Activated B cell treated with CpG ODN at 0.5 μM for 24 hours (primary cell): ENCODE measurements at regions of chr2 and their contacts with region 1.

Region 1: GRCh38 chr2:158903711-158904443 is 64.6 kb upstream of the TANC1 start:
- DNase-seq: no peak
- ATAC-seq: no peak
- H3K4me3 Mint-ChIP-seq: no peak overlapping the region
- H3K27ac Mint-ChIP-seq: no peak overlapping the region
- H3K4me1 Mint-ChIP-seq: no peaks in the 10 kb centered on the region
- H3K27me3 Mint-ChIP-seq: peaks cover 2% of the 10 kb centered on the region
- CTCF ChIP-seq: no peak

Region 2: DNA sequence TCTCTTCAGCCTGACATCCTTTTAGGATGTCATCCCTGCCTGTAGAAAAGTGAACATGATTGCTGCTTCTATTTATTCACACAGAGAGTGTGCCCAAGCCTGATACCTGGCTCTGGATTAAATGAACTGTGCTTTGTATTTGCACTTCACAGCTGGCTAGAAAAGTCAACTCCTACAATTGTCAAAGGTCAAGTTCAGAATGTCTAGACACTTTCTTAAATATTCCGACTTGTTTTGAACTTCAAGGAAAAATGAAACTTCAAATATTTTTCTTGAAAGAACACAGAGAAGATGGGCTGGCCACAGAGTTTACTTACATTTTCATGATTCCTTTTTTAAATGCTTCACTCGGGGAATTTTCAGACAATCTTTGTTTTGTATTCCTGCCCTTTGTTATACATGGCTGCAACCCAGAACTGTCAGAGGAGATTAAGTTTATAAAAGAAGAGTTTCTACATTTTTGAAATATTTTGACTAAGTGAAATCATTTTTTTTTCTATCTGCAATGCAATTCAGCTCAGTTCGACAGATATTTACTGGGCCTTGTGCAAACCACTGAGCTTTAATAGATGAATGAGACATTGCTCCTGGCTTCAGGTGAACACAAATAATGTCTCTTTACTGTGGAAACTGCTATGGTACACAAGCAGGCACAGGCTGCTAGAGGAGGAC is 75.2 kb before region 1 on chr2:
- CTCF ChIA-PET with region 1: no interaction called
- POLR2A ChIA-PET with region 1: no interaction called
- intact Hi-C with region 1: no loop called
- DNase-seq: no peak
- ATAC-seq: no peak
- H3K4me3 Mint-ChIP-seq: no peak overlapping the region
- H3K27ac Mint-ChIP-seq: no peak overlapping the region
- H3K4me1 Mint-ChIP-seq: no peaks in the 10 kb centered on the region
- H3K27me3 Mint-ChIP-seq: peaks cover 2% of the 10 kb centered on the region
- CTCF ChIP-seq: no peak

Region 3: GRCh38 chr2:158878003-158878402 is 25.9 kb before region 1 on chr2:
- CTCF ChIA-PET with region 1: no interaction called
- POLR2A ChIA-PET with region 1: no interaction called
- intact Hi-C with region 1: no loop called
- DNase-seq: no peak
- ATAC-seq: no peak
- H3K4me3 Mint-ChIP-seq: no peak overlapping the region
- H3K27ac Mint-ChIP-seq: no peak overlapping the region
- H3K4me1 Mint-ChIP-seq: no peaks in the 10 kb centered on the region
- H3K27me3 Mint-ChIP-seq: no peaks in the 10 kb centered on the region
- CTCF ChIP-seq: no peak

Region 4: GRCh38 chr2:159118115-159118858 is 214.4 kb after region 1 on chr2:
- CTCF ChIA-PET with region 1: interaction called, 20 read pairs
- POLR2A ChIA-PET with region 1: no interaction called
- intact Hi-C with region 1: loop called (anchors 1 kb)
- DNase-seq: peak; percentile 31
- ATAC-seq: peak; percentile 71
- H3K4me3 Mint-ChIP-seq: no peak overlapping the region
- H3K27ac Mint-ChIP-seq: no peak overlapping the region
- H3K4me1 Mint-ChIP-seq: peaks cover 3% of the 10 kb centered on the region
- H3K27me3 Mint-ChIP-seq: no peaks in the 10 kb centered on the region
- CTCF ChIP-seq: no peak

Region 5: DNA sequence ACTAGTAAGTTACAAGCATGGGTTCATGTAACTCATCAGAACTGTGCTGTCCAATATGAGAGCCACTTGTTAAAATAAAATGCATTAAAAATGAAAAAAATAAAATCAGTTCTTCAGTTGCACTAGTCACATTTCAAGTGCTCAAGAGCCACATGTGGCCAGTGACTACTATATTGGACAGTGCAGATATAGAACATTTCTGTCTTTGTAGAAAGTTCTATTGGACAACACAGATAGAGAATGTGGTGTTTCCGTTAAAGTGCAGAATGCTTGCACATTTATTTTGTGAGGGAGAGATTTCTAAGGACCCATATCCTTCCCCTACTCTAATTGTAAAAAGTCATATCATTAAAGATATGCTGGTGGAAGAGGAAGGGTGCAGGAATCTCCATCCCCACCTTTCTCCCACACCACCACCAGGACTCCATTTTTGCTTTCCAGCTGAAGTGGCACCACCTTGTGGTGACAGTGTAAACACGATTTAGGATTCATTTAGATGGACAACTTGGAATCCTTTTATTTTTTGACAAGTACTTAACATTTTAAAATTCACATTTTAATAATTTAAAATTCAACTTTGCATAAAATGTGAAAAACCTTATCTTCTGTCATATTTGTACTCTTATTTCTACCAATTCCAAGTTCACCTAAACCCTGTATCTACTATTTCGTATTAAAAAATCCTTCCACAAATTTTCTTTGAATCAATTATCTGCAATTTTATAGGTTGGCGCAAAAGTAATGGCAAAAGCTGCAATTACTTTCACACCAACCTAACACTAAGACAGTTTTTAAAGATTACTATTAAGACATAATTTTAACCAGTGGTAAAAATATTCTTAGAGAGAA is 903.5 kb after region 1 on chr2:
- CTCF ChIA-PET with region 1: no interaction called
- POLR2A ChIA-PET with region 1: no interaction called
- intact Hi-C with region 1: loop called (anchors 1 kb)
- DNase-seq: no peak
- ATAC-seq: no peak
- H3K4me3 Mint-ChIP-seq: no peak overlapping the region
- H3K27ac Mint-ChIP-seq: no peak overlapping the region
- H3K4me1 Mint-ChIP-seq: peaks cover 4% of the 10 kb centered on the region
- H3K27me3 Mint-ChIP-seq: no peaks in the 10 kb centered on the region
- CTCF ChIP-seq: no peak

Region 6: DNA sequence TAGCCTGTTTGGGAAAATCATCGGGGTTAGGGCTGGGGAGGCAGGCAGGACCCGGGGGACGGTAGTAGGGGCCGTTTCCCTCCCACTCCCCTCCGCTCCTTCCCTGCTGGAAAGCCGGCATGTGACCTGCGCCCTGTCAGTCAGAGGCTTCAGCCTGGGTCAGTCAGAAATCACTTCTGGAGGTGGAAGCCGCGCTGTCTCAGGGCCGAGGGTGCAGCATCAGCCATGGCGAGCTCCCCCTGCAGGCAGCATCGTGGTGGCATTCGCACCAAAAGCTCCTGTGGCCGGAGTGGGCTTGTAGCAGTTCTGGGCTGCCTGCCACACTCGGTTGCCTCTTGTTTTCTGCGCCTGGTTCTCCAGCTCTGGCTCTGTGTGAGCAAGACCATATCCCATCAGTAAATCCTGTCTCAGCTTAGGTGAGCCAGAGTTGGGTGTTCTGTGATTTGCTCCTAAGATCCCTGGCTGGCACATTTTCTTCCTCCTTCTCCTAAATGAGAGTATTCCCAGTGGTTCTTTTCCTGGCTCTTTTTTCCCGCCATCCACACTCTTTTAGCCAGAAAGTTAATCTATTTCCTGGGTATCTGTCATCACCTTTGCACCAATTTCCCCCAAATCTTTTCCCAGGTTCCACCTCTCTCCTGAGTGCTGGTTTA is 1018.0 kb after region 1 on chr2:
- CTCF ChIA-PET with region 1: no interaction called
- POLR2A ChIA-PET with region 1: no interaction called
- intact Hi-C with region 1: loop called (anchors 1 kb)
- DNase-seq: peak; percentile 65
- ATAC-seq: peak; percentile 97
- H3K4me3 Mint-ChIP-seq: no peak overlapping the region
- H3K27ac Mint-ChIP-seq: peak overlapping the region; percentile 6
- H3K4me1 Mint-ChIP-seq: peaks cover 28% of the 10 kb centered on the region
- H3K27me3 Mint-ChIP-seq: no peaks in the 10 kb centered on the region
- CTCF ChIP-seq: no peak

Region 7: DNA sequence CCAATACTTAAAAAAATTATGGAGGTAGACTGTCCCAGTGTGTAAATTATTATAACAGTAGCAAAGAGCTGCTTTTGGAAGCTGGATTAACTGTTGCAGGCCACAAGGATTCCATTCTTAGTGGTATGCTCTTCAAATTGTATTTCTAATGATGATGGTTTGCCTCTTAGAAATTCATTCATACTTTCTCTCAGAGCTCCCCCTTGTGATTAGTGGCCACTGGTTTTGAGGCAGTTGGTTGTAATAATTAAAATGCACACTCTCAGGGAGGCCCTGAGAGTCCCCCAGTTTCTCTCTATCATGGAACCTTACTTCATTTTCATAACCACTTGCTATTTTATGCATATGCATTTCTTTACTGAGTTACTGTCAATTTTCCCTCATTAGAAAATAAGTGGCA is 1036.1 kb after region 1 on chr2:
- CTCF ChIA-PET with region 1: no interaction called
- POLR2A ChIA-PET with region 1: no interaction called
- intact Hi-C with region 1: loop called (anchors 1 kb)
- DNase-seq: no peak
- ATAC-seq: peak; percentile 54
- H3K4me3 Mint-ChIP-seq: no peak overlapping the region
- H3K27ac Mint-ChIP-seq: no peak overlapping the region
- H3K4me1 Mint-ChIP-seq: peaks cover 8% of the 10 kb centered on the region
- H3K27me3 Mint-ChIP-seq: no peaks in the 10 kb centered on the region
- CTCF ChIP-seq: no peak

Region 8: DNA sequence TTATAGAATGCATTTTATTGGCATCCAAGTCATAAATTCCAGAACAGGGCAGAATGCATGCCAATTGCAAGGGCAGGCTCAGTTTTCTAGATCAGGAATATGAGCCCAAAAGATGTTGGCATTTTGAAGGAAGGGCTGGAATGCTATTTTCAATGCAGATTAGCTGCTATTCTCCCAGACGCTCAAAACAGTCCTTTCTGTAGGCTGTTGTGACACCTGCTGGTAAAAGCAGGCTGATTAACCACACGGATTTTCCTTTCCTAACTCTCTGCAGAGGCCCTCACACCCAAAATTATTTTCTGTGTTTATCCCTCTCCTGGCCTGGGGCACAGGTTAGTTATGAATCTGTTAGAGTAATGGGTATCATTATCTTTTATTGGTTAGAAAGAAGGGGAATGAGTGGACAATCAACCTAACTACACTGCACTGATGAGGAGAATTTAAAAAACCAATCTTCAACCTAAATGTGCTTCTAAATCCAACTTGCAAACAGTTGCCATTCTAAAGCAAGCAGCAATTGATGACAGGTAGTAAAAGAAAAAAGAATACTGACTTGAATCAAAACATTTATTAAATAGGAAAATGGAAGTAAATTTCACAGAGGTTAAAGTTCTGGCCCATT is 1064.5 kb after region 1 on chr2:
- CTCF ChIA-PET with region 1: interaction called, 8 read pairs
- POLR2A ChIA-PET with region 1: no interaction called
- intact Hi-C with region 1: loop called (anchors 1 kb)
- DNase-seq: no peak
- ATAC-seq: no peak
- H3K4me3 Mint-ChIP-seq: no peak overlapping the region
- H3K27ac Mint-ChIP-seq: no peak overlapping the region
- H3K4me1 Mint-ChIP-seq: peaks cover 9% of the 10 kb centered on the region
- H3K27me3 Mint-ChIP-seq: no peaks in the 10 kb centered on the region
- CTCF ChIP-seq: no peak

Region 9: GRCh38 chr2:160210599-160211138 is 1306.8 kb after region 1 on chr2:
- CTCF ChIA-PET with region 1: no interaction called
- POLR2A ChIA-PET with region 1: no interaction called
- intact Hi-C with region 1: loop called (anchors 1 kb)
- DNase-seq: peak; percentile 60
- ATAC-seq: peak; percentile 99
- H3K4me3 Mint-ChIP-seq: no peak overlapping the region
- H3K27ac Mint-ChIP-seq: no peak overlapping the region
- H3K4me1 Mint-ChIP-seq: peaks cover 31% of the 10 kb centered on the region
- H3K27me3 Mint-ChIP-seq: peaks cover 9% of the 10 kb centered on the region
- CTCF ChIP-seq: peak; percentile 85